Activated T-helper 2 cell treated with anti-CD3 and anti-CD28 coated beads, Interferon-gamma antibody, Interleukin-2, Interleukin-4, amounts not matched to agents 10 μg/mL and 5 μg/mL and 100 μg/mL, durations not matched to agents 14 hours and 24 hours and 36 hours (primary cell): ENCODE measurements at regions of chr11 and their contacts with region 1.

Region 1: DNA sequence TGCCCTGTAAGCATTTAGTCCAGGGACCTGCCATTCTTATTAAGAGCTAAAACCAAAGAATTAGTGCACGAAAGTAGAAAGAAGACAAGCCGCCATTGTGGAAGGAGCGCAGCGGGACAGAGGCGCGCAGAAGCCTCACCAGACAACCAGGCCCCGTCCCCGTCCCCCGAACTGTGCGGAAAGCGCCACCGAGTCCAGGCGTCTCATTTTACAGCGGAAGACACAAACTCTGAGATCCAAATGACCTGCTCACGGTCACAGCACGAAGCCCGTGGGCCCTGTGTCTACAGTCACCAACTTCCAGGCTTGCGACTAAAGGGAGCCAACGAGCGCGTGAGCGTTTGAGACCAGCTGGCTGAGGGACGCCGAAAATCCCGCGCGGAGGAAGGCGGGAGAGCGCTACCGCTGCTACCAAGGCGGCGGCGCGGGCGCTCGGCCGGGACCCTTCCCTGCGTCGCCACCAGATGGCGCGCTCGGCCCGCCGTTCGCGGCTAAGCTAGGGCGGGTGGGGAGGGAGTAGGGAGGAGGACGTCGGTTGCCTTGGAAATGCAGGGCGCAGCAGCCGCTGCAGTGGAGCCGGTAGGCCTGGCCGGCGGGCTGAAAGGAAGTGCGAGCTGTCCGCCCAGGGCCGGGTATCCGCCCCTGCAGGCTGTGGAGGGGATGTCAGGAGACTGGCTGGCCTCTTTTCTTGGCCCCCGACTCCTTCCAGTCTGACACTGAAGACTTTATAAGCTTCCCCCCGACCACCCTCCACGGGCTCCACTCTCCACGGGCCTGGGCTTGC is 434 bp upstream of the CCDC83 start:
- DNase-seq: peak; percentile 87
- H3K4me3 Mint-ChIP-seq: peak overlapping the region; percentile 84
- H3K27ac Mint-ChIP-seq: peak overlapping the region; percentile 90
- H3K4me1 Mint-ChIP-seq: peaks cover 13% of the 10 kb centered on the region
- H3K27me3 Mint-ChIP-seq: peaks cover 3% of the 10 kb centered on the region

Region 2: GRCh38 chr11:85595285-85595884 is 259.4 kb before region 1 on chr11:
- intact Hi-C with region 1: loop called (anchors 2 kb)
- DNase-seq: no peak
- H3K4me3 Mint-ChIP-seq: no peak overlapping the region
- H3K27ac Mint-ChIP-seq: no peak overlapping the region
- H3K4me1 Mint-ChIP-seq: no peaks in the 10 kb centered on the region
- H3K27me3 Mint-ChIP-seq: peaks cover 15% of the 10 kb centered on the region

Region 3: GRCh38 chr11:85694386-85694980 is 160.3 kb before region 1 on chr11:
- intact Hi-C with region 1: loop called (anchors 1 kb)
- DNase-seq: no peak
- H3K4me3 Mint-ChIP-seq: no peak overlapping the region
- H3K27ac Mint-ChIP-seq: no peak overlapping the region
- H3K4me1 Mint-ChIP-seq: peaks cover 43% of the 10 kb centered on the region
- H3K27me3 Mint-ChIP-seq: peaks cover 7% of the 10 kb centered on the region

Region 4: GRCh38 chr11:85947431-85948272 is 92.9 kb after region 1 on chr11:
- intact Hi-C with region 1: loop called (anchors 5 kb)
- DNase-seq: no peak
- H3K4me3 Mint-ChIP-seq: peak overlapping the region; percentile 15
- H3K27ac Mint-ChIP-seq: peak overlapping the region; percentile 75
- H3K4me1 Mint-ChIP-seq: peaks cover 35% of the 10 kb centered on the region
- H3K27me3 Mint-ChIP-seq: no peaks in the 10 kb centered on the region

Region 5: DNA sequence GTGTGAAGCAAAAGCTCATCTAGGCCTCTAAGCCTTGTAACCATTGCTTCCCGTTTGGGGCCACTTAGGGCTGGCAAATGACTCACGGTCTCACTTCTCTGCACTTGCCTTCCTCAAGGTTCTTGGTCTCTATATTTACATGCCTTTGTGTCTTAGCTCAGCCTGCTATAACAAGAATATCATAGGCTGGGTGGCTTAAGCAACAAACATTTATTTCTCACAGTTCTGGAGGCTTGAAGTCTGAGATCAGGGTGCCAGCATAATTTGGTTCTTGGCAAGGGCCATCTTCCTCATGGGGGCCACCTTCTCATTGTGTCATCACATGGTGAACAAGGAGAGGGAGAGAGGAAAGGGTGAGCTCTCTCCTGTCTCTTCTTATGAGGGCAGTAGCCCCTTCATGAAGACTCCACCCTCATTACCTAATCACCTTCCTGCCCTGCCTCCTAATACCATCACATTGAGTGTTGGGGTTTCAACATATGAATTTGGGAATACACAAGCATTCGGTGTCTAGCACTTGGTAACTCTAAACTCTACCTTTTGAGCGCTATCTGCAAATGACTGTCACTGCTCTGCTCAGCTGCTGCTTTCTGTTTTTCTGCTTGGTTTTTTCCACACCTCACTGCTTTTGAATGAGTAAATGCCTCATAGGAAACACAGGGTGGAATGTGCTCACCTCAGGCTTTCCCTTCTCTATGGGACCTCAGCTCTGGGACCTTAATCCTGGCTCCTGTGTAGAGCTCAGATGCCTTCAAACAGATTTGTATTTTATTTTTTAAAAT is 833.8 kb after region 1 on chr11:
- intact Hi-C with region 1: loop called (anchors 10 kb)
- DNase-seq: no peak
- H3K4me3 Mint-ChIP-seq: peak overlapping the region; percentile 61
- H3K27ac Mint-ChIP-seq: peak overlapping the region; percentile 92
- H3K4me1 Mint-ChIP-seq: peaks cover 24% of the 10 kb centered on the region
- H3K27me3 Mint-ChIP-seq: peaks cover 6% of the 10 kb centered on the region

Region 6: DNA sequence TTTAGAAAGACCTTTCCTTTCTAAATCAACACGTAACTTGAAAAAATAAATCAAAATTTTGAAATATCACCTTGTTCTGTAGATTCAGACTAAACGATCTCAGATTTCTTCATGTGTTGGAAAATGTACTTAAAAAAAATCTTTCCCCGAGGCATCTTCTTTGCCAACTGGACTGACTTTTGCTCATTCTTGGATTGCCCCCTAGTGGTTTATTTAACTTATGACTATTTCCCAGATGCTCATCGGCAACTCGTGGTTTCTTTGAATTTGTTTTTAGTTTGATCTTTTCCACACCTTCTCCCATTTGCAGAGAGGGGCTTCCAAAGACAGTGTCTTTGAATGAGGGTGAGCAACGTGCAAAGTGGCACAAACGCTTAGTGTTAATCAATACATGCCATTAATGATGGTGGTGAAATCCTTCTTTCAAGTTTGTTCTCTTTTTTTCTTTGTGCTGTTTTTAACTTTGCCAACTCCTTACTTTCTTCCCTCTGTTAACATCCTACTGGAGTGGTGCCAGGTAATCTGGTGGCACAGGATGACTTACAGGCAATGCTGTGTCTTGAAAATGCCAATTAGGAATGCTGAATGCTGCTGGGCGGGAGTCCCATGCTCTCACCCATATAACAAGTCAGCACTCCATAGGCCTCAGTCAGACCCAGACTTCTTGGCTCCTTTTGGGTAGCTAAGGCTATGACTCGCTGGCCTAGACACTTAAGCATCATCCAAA is 963.9 kb after region 1 on chr11:
- intact Hi-C with region 1: loop called (anchors 5 kb)
- DNase-seq: no peak
- H3K4me3 Mint-ChIP-seq: no peak overlapping the region
- H3K27ac Mint-ChIP-seq: no peak overlapping the region
- H3K4me1 Mint-ChIP-seq: no peaks in the 10 kb centered on the region
- H3K27me3 Mint-ChIP-seq: peaks cover 20% of the 10 kb centered on the region